ENCODE measurements at regions of chr2 and their contacts with region 1.

Region 1: GRCh38 chr2:20539133-20539719 is 92.4 kb downstream of the RHOB start:
- DNase-seq: peak; percentile 89
- ATAC-seq: peak; percentile 21 to 31
- H3K4me3 ChIP-seq: peak overlapping the region; percentile 5 to 31 (median 21)
- H3K27ac ChIP-seq: peak overlapping the region; percentile 88 to 96 (median 94)
- H3K4me1 ChIP-seq: peaks cover 73 to 77% of the 10 kb centered on the region in 2 donors
- H3K27me3 ChIP-seq: no peaks in the 10 kb centered on the region
- CTCF ChIP-seq: no peak
- POLR2A ChIP-seq: no peak

Region 2: DNA sequence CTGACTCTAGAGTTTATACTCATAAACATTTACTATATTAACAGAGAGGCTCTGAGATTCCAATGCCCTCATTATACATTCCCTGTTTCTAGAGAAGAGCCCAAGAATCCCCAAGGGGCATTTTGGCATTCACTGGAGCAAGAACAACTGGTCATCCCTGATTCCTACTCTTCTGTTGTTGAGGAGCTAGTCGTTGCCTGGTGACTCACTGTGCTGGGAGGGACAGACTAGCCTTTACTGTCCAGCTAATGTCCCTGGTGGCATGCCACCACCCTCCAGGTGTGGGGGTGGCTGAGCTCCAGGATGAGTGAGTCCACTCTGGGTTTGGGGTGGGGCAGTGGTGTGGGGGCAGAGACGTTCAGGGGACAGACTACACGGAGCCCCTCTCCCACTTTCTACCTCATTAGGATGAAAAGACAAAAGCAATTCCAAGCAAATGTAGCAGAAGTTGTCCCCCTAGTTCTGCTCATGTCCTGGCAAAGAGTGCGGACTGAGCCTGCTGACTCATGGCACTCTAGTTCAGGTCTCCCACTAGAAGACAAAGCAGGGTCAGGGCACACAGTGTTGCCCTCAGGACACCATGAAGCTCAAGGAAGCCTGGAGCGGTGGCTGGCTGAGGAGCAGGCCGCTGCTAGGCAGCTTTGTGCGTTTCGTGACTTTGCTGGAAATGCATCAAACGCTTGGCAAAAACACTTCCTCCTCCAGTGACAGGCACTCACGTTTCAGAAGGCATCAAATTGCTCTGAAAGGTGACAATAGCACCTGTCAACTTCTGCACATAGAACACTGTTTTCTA is 42.9 kb before region 1 on chr2:
- in situ Hi-C with region 1: loop called in 1 of 4 experiments (anchors 5 kb)
- intact Hi-C with region 1: no loop called
- DNase-seq: peak; percentile 91 to 94
- ATAC-seq: peak; percentile 87
- H3K4me3 ChIP-seq: no peak overlapping the region
- H3K27ac ChIP-seq: peak overlapping the region; percentile 69 to 92 (median 80)
- H3K4me1 ChIP-seq: peaks cover 13 to 19% of the 10 kb centered on the region in 2 donors
- H3K27me3 ChIP-seq: no peaks in the 10 kb centered on the region
- CTCF ChIP-seq: no peak
- POLR2A ChIP-seq: peak in 1 of 2 donors; percentile 7

Region 3: DNA sequence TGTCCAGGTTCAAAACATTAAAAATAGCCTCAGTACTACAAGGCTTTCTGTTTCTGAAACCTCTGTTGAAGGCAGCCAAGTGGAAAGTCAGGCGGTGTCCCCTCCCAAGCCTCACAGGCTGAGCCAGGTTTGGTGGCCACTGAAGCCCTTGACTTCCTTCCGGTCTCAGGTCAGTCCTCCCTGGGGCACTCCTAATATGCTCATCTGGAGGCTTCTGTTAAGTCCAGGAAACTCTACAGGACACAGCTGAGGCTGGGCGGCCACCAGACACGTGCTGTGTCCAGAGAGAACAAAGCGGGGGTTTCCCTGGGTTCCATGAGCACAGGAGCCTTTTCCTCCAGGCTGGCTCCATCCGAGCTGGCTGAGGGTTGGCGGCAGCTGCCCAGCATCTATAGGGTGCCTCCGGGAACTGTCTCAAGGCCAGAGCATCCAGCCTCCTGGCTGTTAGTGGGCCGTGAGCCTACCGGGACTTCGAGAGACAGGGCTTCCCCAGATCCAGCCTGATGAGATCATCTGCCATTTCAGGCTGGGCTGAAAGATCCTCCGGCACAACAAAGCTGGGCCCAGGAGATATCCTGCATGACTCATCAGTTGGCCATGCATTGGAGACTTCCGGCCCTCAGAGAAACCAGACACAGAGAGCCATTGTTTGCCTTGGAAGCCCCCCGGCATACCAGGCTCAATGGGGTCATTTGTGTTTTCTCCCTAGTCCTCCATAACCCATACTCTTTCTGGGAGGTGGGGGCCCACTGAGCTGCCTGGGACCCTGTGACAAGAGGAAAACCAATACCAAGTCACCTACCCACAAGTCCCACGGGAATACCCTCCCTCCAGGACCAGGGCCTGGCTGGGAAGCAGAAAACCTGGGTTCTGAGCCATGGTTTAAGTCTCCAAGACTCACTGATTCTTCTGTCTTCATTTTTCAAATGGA is 39.9 kb after region 1 on chr2:
- in situ Hi-C with region 1: no loop called
- intact Hi-C with region 1: loop called (anchors 2 kb)
- DNase-seq: peak; percentile 87 to 89
- ATAC-seq: peak; percentile 94 to 95
- H3K4me3 ChIP-seq: peak overlapping the region in 1 of 4 donors; percentile 10
- H3K27ac ChIP-seq: peak overlapping the region; percentile 80 to 91 (median 82)
- H3K4me1 ChIP-seq: peaks cover 38 to 55% of the 10 kb centered on the region in 2 donors
- H3K27me3 ChIP-seq: no peaks in the 10 kb centered on the region
- CTCF ChIP-seq: no peak
- POLR2A ChIP-seq: no peak

Region 4: GRCh38 chr2:20617892-20618467 is 78.8 kb after region 1 on chr2:
- in situ Hi-C with region 1: loop called in 2 of 4 experiments (anchors 10 kb)
- intact Hi-C with region 1: loop called (anchors 1 kb)
- DNase-seq: peak; percentile 98 to 99
- ATAC-seq: peak; percentile 62 to 68
- H3K4me3 ChIP-seq: peak overlapping the region in 1 of 4 donors; percentile 1
- H3K27ac ChIP-seq: peak overlapping the region; percentile 87 to 95 (median 94)
- H3K4me1 ChIP-seq: peaks cover 72 to 92% of the 10 kb centered on the region in 2 donors
- H3K27me3 ChIP-seq: no peaks in the 10 kb centered on the region
- CTCF ChIP-seq: peak; percentile 69 to 81 (median 76)
- POLR2A ChIP-seq: peak; percentile 40 to 50

Measured in gastrocnemius medialis (tissue), 4 donors.